H1 (cell line): ENCODE measurements at regions of chr17 and their contacts with region 1.

Region 1: DNA sequence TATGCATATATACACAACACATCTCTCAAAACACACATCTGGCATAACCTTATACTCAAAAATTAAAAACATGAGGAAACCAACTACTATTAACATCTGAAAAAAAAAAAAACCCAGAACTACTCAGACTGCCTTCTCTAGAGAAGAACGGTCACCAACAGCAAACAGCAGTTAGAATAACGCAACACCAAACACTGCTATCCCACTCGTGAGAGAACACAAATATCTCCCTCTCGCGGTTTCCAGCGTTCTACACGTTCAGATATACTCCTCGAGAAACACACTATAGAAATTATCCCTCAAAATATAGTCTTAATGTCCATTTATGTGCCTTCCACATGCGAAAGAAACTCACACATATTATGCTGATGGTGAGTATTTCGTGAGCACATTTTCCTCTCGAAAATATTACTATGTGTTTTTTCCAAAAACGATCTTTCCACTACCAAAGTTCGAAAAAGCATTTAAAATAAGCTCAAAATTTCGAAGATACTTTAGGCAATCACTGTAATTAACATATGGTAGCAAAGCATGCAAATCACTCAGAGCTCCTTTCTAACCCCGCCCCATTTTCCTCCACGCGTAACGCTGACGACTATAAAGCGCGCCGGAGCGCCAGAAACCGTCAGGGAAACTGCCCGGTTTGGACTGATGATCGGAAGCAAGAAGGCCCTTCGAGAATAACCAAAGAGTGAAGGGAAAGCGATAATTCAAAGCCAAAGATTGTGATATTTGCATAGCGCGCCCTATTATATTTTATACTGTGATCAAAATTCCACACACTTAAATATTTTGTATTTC is 60.1 kb downstream of the TEX14 start:
- DNase-seq: peak; percentile 89 to 95
- H3K4me3 ChIP-seq: peak overlapping the region; percentile 41 to 65 (median 48); a peak in 7 of 8 replicates
- H3K27ac ChIP-seq: peak overlapping the region; percentile 96
- H3K4me1 ChIP-seq: peaks cover 0 to 3% (median 2%) of the 10 kb centered on the region in 4 experiments; a peak in 6 of 7 replicates
- H3K27me3 ChIP-seq: no peaks in the 10 kb centered on the region
- CTCF ChIP-seq: no peak
- EP300 ChIP-seq: 0 out of 3 replicates have a peak, but pooled peaks of 1 of the 2 experiments have one; percentile 64
- POLR2A ChIP-seq: peak; percentile 99 to 100
- RAD21 ChIP-seq: 0 out of 4 replicates have a peak, but pooled peaks of 1 of the 2 experiments have one; percentile 11

Region 2: DNA sequence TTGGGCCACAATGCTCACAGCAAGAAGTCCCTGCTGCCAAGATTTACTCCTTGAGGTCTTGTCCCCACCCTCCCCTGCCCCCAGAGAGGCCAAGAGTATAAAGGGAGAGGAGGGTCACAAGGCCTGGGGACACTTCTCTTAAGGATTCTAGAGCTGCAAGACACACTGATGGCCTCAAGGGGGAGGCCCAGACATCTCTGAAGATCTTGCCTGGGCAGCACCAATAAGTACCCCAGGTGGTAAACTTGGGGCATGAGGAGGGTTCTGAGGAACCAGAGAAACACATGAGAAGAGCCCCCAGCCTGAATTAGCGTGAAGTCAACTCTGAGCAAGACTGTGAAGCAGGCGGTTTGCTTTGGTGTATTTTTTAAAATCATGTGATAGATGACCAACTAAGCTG is 90.5 kb before region 1 on chr17:
- CTCF ChIA-PET with region 1: interaction called, 6 read pairs
- POLR2A ChIA-PET with region 1: interaction called, 20 read pairs
- DNase-seq: no peak
- H3K4me3 ChIP-seq: no peak overlapping the region
- H3K27ac ChIP-seq: no peak overlapping the region
- H3K4me1 ChIP-seq: no peaks in the 10 kb centered on the region; a peak in 1 of 7 replicates
- H3K27me3 ChIP-seq: no peaks in the 10 kb centered on the region
- CTCF ChIP-seq: peak; percentile 61 to 65 (median 64)
- EP300 ChIP-seq: no peak
- POLR2A ChIP-seq: no peak
- RAD21 ChIP-seq: peak; percentile 64 to 69

Region 3: DNA sequence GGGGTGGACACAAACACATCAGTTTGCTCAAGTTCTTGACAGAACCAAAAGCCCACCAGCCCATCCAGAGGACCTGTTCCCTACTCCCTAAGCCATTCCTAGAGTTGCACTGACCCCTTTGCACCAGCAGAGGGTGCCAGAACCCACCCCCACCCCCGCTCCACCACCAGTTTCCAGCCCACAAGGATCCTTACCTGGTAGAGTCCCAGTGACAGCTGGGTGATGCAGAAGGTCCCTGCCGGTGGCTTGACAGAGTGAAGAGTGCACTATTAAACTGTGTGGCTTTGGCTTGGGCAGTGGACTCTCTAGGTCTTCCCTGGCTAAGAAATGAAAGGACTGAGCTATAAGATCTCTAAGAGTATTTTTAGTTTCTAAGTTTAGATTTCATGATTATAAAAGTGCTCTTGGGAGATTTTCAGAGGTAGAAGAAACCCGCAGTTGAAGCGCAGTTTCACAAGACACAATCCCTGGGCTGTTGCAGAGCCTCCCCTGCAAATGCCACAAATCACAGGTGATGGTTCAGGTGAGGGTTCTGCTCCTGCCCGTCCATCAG is 43.9 kb before region 1 on chr17:
- CTCF ChIA-PET with region 1: interaction called, 6 read pairs
- POLR2A ChIA-PET with region 1: interaction called, 68 read pairs
- DNase-seq: peak; percentile 46 to 70
- H3K4me3 ChIP-seq: no peak overlapping the region
- H3K27ac ChIP-seq: no peak overlapping the region
- H3K4me1 ChIP-seq: no peaks in the 10 kb centered on the region
- H3K27me3 ChIP-seq: no peaks in the 10 kb centered on the region
- CTCF ChIP-seq: peak; percentile 91 to 96 (median 91)
- EP300 ChIP-seq: no peak
- POLR2A ChIP-seq: no peak
- RAD21 ChIP-seq: peak; percentile 92 to 94

Region 4: DNA sequence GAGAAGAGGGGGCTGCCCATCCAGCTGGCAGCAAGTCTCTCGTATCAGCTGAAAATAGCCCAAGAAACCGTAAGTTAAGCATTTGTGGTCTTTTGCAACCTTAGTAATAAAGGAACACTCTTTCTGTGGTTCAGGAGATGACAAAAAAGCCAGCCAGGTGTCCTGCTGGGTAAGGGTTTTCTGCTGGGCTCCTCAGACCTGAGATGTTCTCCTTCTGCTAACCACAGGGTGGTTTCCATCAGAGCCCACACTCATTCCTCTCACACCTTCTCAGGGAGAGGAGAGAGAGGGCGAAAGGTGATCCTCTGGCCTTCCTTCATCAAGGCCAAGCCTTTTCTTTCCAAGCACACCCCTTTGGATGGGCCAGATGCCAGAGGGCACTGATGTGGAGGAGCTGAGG is 10.5 kb before region 1 on chr17:
- CTCF ChIA-PET with region 1: no interaction called
- POLR2A ChIA-PET with region 1: interaction called, 73 read pairs
- DNase-seq: no peak
- H3K4me3 ChIP-seq: no peak overlapping the region
- H3K27ac ChIP-seq: no peak overlapping the region
- H3K4me1 ChIP-seq: no peaks in the 10 kb centered on the region
- H3K27me3 ChIP-seq: no peaks in the 10 kb centered on the region
- CTCF ChIP-seq: no peak
- EP300 ChIP-seq: no peak
- POLR2A ChIP-seq: no peak
- RAD21 ChIP-seq: no peak

Region 5: GRCh38 chr17:58658804-58659713 is 27.3 kb after region 1 on chr17:
- CTCF ChIA-PET with region 1: interaction called, 5 read pairs
- POLR2A ChIA-PET with region 1: interaction called, 230 read pairs
- DNase-seq: peak; percentile 82 to 86
- H3K4me3 ChIP-seq: peak overlapping the region; percentile 29 to 62 (median 39); a peak in 5 of 8 replicates
- H3K27ac ChIP-seq: peak overlapping the region; percentile 98
- H3K4me1 ChIP-seq: peaks cover 0 to 7% (median 1%) of the 10 kb centered on the region in 4 experiments; a peak in 2 of 7 replicates
- H3K27me3 ChIP-seq: no peaks in the 10 kb centered on the region
- CTCF ChIP-seq: no peak
- EP300 ChIP-seq: 0 out of 3 replicates have a peak, but pooled peaks of 1 of the 2 experiments have one; percentile 73
- POLR2A ChIP-seq: peak; percentile 100
- RAD21 ChIP-seq: peak in 1 of 2 experiments; percentile 16; a peak in 1 of 4 replicates

Region 6: DNA sequence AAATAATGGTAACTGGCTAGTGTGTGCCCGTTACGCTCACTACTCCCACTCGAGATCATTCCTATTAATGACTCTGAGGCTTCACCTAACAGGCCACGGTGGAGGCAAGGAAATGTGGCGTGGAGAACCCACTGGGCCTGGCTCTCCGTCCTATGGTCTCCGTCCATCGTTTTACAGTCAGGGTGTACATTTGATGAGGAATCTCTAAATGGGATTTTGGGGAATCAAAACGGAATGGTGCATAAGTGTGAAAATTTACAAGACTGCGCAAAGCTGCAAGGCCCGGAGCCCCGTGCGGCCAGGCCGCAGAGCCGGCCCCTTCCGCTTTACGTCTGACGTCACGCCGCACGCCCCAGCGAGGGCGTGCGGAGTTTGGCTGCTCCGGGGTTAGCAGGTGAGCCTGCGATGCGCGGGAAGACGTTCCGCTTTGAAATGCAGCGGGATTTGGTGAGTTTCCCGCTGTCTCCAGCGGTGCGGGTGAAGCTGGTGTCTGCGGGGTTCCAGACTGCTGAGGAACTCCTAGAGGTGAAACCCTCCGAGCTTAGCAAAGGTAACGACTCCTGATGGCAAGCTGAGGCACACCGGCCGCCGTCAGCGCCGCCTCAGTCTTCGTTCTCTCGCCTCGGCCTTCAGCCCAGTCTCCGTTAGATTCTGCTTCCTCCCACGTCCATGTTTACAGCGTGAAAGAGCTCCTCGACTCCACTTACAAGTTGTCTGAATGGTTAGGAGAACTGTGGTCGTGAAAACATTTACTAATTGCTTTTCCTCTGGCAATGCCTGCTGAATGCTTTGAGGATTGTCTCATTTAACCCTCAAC is 60.7 kb after region 1 on chr17 and contains the start of gene RAD51C:
- CTCF ChIA-PET with region 1: no interaction called
- POLR2A ChIA-PET with region 1: interaction called, 19 read pairs
- DNase-seq: peak; percentile 27 to 66
- H3K4me3 ChIP-seq: peak within 1 kb of the TSS; percentile 30 to 64 (median 55)
- H3K27ac ChIP-seq: peak within 1 kb of the TSS; percentile 4; the same call in 1 of the 2 replicates
- H3K4me1 ChIP-seq: peaks cover 0 to 4% (median 0%) of the 10 kb centered on the region in 4 experiments; a peak in 3 of 7 replicates
- H3K27me3 ChIP-seq: no peaks in the 10 kb centered on the region
- CTCF ChIP-seq: no peak
- EP300 ChIP-seq: peak in 1 of 2 experiments; percentile 49; a peak in 1 of 3 replicates
- POLR2A ChIP-seq: peak in 1 of 2 experiments; percentile 78; a peak in 2 of 3 replicates
- RAD21 ChIP-seq: no peak; a peak in 1 of 4 replicates
- total RNA-seq, gene RAD51C: 10.2 and 10.4 TPM in 2 replicates